Heart left ventricle (tissue), 16 donors: ENCODE measurements at regions of chr7 and their contacts with region 1.

Region 1: GRCh38 chr7:149284850-149285626 is 23.0 kb downstream of the ZNF783 start:
- DNase-seq: peak; percentile 94 to 97 (median 96)
- ATAC-seq: peak; percentile 96 to 99 (median 98)
- H3K4me3 ChIP-seq: peak overlapping the region; percentile 42 to 90 (median 68)
- H3K27ac ChIP-seq: peak overlapping the region in 5 of 12 donors; percentile 25 to 63 (median 58)
- H3K4me1 ChIP-seq: peaks cover 0 to 19% (median 7%) of the 10 kb centered on the region in 12 donors
- H3K27me3 ChIP-seq: no peaks in the 10 kb centered on the region
- CTCF ChIP-seq: peak in 2 of 12 donors; percentile 3 to 10
- POLR2A ChIP-seq: peak in 1 of 2 donors; percentile 27

Region 2: GRCh38 chr7:148884299-148885022 is 400.6 kb before region 1 on chr7:
- intact Hi-C with region 1: no loop called
- DNase-seq: peak; percentile 93 to 97 (median 94)
- ATAC-seq: peak; percentile 98 to 100 (median 99)
- H3K4me3 ChIP-seq: peak overlapping the region; percentile 65 to 99 (median 93)
- H3K27ac ChIP-seq: peak overlapping the region; percentile 77 to 98 (median 92)
- H3K4me1 ChIP-seq: peaks cover 0 to 17% (median 4%) of the 10 kb centered on the region in 12 donors
- H3K27me3 ChIP-seq: no peaks in the 10 kb centered on the region
- CTCF ChIP-seq: no peak
- POLR2A ChIP-seq: peak in 1 of 2 donors; percentile 83

Region 3: DNA sequence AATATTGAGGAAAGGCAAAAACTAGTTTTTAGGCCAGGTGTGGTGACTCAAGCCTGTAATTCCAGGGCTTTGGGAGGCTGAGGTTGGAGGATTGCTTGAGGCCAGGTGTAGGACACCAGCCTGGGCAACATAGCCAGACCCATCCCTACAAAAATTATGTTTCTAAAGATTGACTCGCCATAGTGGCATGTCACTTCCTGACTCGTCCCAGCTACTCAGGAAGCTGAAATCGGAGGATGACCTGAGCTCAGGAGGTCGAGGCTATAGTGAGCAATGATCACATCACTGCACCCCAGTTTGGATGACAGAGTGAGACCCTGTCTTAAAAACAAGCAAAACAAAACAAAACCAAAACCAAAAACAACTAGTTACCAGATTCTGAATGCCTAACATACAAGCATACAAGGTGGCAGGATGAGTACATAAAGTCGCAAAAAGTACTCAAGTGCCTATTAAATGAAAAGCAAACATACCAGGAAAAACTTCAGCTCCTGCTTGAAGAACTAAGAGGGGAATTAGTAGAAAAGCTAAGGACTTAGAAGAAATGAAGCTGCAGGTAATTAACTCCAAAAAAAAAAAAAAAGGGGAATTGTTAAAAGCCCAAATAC is 123.7 kb before region 1 on chr7:
- intact Hi-C with region 1: no loop called
- DNase-seq: no peak
- ATAC-seq: no peak
- H3K4me3 ChIP-seq: no peak overlapping the region
- H3K27ac ChIP-seq: no peak overlapping the region
- H3K4me1 ChIP-seq: peaks cover 0 to 4% (median 0%) of the 10 kb centered on the region in 12 donors
- H3K27me3 ChIP-seq: no peaks in the 10 kb centered on the region
- CTCF ChIP-seq: no peak
- POLR2A ChIP-seq: no peak

Region 4: DNA sequence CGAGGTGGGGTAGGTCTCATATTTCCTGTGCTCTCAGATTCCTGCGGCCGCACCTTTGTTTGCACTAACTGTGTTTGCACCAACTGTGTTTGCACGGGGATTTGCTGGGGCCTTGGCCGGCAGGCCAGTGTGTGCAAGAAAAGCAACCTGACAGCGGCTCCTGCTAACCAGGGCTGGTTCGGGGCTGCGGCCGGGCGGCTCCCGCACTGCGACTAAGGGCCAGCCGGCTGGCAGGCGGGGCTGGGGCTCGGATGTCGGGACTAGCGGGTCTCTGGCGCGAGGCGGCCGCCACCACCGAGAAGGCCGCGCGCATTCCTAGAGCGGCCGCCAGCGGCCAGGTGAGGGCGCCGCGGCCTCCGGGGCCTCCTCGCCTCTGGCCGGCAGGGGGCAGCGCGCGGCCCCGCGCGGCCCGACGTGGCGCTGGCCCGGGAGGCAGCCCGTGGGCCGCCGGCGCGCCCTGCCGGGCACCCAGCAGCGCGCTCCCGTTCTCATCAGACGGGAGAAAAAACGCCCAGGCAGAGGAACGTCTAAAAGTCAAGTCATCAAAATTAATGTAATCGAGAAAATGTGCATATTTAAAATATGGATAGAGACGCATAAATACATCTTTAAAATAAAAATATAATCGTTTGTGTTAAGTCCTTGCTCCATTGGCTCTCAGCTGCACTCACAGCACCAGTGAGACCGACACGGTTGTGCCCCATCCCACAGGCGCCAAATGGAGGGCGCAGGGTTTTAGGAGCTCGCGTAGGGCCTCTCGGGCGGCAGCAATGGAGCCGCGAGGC is 137.3 kb after region 1 on chr7:
- intact Hi-C with region 1: loop called in 1 of 10 experiments (anchors 10 kb)
- DNase-seq: peak; percentile 60 to 85 (median 61)
- ATAC-seq: peak; percentile 60 to 97 (median 93)
- H3K4me3 ChIP-seq: peak overlapping the region; percentile 29 to 65 (median 54)
- H3K27ac ChIP-seq: peak overlapping the region in 7 of 12 donors; percentile 3 to 77 (median 33)
- H3K4me1 ChIP-seq: peaks cover 0 to 18% (median 7%) of the 10 kb centered on the region in 12 donors
- H3K27me3 ChIP-seq: no peaks in the 10 kb centered on the region
- CTCF ChIP-seq: peak; percentile 1 to 84 (median 52)
- POLR2A ChIP-seq: no peak